CD8-positive, alpha-beta memory T cell (primary cell): ENCODE measurements at regions of chr1 and their contacts with region 1.

Region 1: GRCh38 chr1:205321164-205321958 is at the start of gene NUAK2:
- DNase-seq: peak; percentile 67 to 89 (median 82)
- H3K4me3 ChIP-seq: peak within 1 kb of the TSS; percentile 96
- H3K4me3 Mint-ChIP-seq: peak within 1 kb of the TSS; percentile 93 to 100 (median 96)
- H3K27ac ChIP-seq: peak within 1 kb of the TSS; percentile 48
- H3K27ac Mint-ChIP-seq: peak within 1 kb of the TSS; percentile 84 to 94 (median 89)
- H3K4me1 ChIP-seq: peaks cover 55% of the 10 kb centered on the region
- H3K4me1 Mint-ChIP-seq: peaks cover 59 to 74% (median 74%) of the 10 kb centered on the region in 3 donors
- H3K27me3 ChIP-seq: no peaks in the 10 kb centered on the region
- H3K27me3 Mint-ChIP-seq: peaks cover 0 to 4% of the 10 kb centered on the region in 2 donors
- total RNA-seq, gene NUAK2: 4.5 to 4.7 TPM

Region 2: GRCh38 chr1:205284343-205285144 is 36.8 kb before region 1 on chr1:
- CTCF ChIA-PET with region 1: interaction called, 1,351 read pairs
- POLR2A ChIA-PET with region 1: interaction called, 86 read pairs
- DNase-seq: peak; percentile 80 to 97 (median 90)
- H3K4me3 ChIP-seq: peak overlapping the region; percentile 80
- H3K4me3 Mint-ChIP-seq: peak overlapping the region; percentile 73 to 87 (median 81)
- H3K27ac ChIP-seq: peak overlapping the region; percentile 7
- H3K27ac Mint-ChIP-seq: peak overlapping the region; percentile 77 to 98 (median 94)
- H3K4me1 ChIP-seq: peaks cover 85% of the 10 kb centered on the region
- H3K4me1 Mint-ChIP-seq: peaks cover 78 to 86% (median 80%) of the 10 kb centered on the region in 3 donors
- H3K27me3 ChIP-seq: no peaks in the 10 kb centered on the region
- H3K27me3 Mint-ChIP-seq: peaks cover 0 to 5% of the 10 kb centered on the region in 2 donors

Region 3: GRCh38 chr1:205294175-205294913 is 27.0 kb before region 1 on chr1:
- CTCF ChIA-PET with region 1: interaction called, 1,351 read pairs
- POLR2A ChIA-PET with region 1: interaction called, 8 read pairs
- DNase-seq: no peak
- H3K4me3 ChIP-seq: no peak overlapping the region
- H3K4me3 Mint-ChIP-seq: no peak overlapping the region
- H3K27ac ChIP-seq: no peak overlapping the region
- H3K27ac Mint-ChIP-seq: peak overlapping the region in 4 of 8 donors; percentile 11 to 68 (median 18)
- H3K4me1 ChIP-seq: peaks cover 53% of the 10 kb centered on the region
- H3K4me1 Mint-ChIP-seq: peaks cover 55 to 83% (median 69%) of the 10 kb centered on the region in 3 donors
- H3K27me3 ChIP-seq: no peaks in the 10 kb centered on the region
- H3K27me3 Mint-ChIP-seq: no peaks in the 10 kb centered on the region

Region 4: GRCh38 chr1:205335643-205336091 is 14.3 kb after region 1 on chr1:
- CTCF ChIA-PET with region 1: interaction called, 43 read pairs
- POLR2A ChIA-PET with region 1: interaction called, 5 read pairs
- DNase-seq: peak; percentile 63 to 83 (median 64)
- H3K4me3 ChIP-seq: no peak overlapping the region
- H3K4me3 Mint-ChIP-seq: no peak overlapping the region
- H3K27ac ChIP-seq: no peak overlapping the region
- H3K27ac Mint-ChIP-seq: no peak overlapping the region
- H3K4me1 ChIP-seq: no peaks in the 10 kb centered on the region
- H3K4me1 Mint-ChIP-seq: peaks cover 0 to 2% (median 0%) of the 10 kb centered on the region in 3 donors
- H3K27me3 ChIP-seq: no peaks in the 10 kb centered on the region
- H3K27me3 Mint-ChIP-seq: peaks cover 0 to 10% of the 10 kb centered on the region in 2 donors

Region 5: DNA sequence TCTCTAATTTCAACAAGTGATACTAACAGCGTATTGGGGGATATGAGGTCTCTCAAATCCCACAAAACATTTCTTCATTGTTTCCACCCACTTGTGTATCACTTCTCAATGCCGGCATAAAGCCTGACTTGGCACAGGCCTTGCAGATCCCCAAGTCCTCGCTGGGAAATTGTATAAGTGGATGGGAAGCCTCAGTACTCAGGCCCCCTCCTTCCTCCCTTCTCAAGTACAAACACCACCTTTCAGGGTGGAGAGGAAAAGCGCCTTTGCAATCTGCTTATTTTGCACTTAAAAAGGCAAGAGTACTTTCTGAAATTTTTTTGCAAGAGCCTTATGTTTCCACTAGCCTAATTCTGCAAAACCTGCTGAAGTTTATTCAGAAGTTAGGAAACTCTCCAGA is 61.2 kb after region 1 on chr1:
- CTCF ChIA-PET with region 1: no interaction called
- POLR2A ChIA-PET with region 1: no interaction called
- DNase-seq: no peak
- H3K4me3 ChIP-seq: no peak overlapping the region
- H3K4me3 Mint-ChIP-seq: no peak overlapping the region
- H3K27ac ChIP-seq: no peak overlapping the region
- H3K27ac Mint-ChIP-seq: no peak overlapping the region
- H3K4me1 ChIP-seq: no peaks in the 10 kb centered on the region
- H3K4me1 Mint-ChIP-seq: no peaks in the 10 kb centered on the region
- H3K27me3 ChIP-seq: no peaks in the 10 kb centered on the region
- H3K27me3 Mint-ChIP-seq: peaks cover 6 to 40% of the 10 kb centered on the region in 2 donors

Region 6: GRCh38 chr1:205440476-205441317 is 119.3 kb after region 1 on chr1:
- CTCF ChIA-PET with region 1: no interaction called
- POLR2A ChIA-PET with region 1: no interaction called
- DNase-seq: peak; percentile 45 to 83 (median 59)
- H3K4me3 ChIP-seq: peak overlapping the region; percentile 78
- H3K4me3 Mint-ChIP-seq: peak overlapping the region; percentile 81 to 96 (median 85)
- H3K27ac ChIP-seq: peak overlapping the region; percentile 63
- H3K27ac Mint-ChIP-seq: peak overlapping the region; percentile 86 to 100 (median 96)
- H3K4me1 ChIP-seq: peaks cover 34% of the 10 kb centered on the region
- H3K4me1 Mint-ChIP-seq: peaks cover 43 to 64% (median 55%) of the 10 kb centered on the region in 3 donors
- H3K27me3 ChIP-seq: no peaks in the 10 kb centered on the region
- H3K27me3 Mint-ChIP-seq: no peaks in the 10 kb centered on the region